ENCODE measurements at regions of chr13 and their contacts with region 1.

Region 1: GRCh38 chr13:98405107-98405571 is 171.8 kb downstream of the STK24 start:
- DNase-seq: no peak
- ATAC-seq: peak; percentile 34

Region 2: GRCh38 chr13:97100821-97101220 is 1304.3 kb before region 1 on chr13:
- intact Hi-C with region 1: no loop called
- DNase-seq: no peak
- ATAC-seq: no peak

Region 3: GRCh38 chr13:98133946-98134345 is 271.2 kb before region 1 on chr13:
- intact Hi-C with region 1: loop called in 1 of 2 experiments (anchors 10 kb)
- DNase-seq: no peak
- ATAC-seq: no peak

Region 4: GRCh38 chr13:98315466-98315865 is 89.7 kb before region 1 on chr13:
- intact Hi-C with region 1: no loop called
- DNase-seq: no peak
- ATAC-seq: no peak

Region 5: DNA sequence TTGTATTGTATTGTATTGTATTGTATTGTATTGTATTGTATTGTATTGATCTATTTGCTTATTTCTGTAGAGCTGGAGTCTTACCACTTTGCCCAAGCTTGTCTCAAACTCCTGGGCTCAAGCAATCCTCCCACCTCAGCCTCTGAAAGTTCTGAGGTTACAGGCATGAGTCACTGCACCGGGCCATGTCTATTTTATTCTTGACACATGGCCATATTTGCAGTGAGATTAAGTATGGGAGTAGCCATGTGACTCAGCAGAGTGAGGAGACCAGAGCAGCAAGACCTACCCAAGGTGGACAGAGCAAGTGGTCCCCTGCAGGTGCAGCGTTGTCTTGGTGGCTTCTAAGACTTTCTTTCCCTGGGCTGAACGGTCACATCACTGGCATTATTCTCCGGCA is 746.4 kb after region 1 on chr13:
- intact Hi-C with region 1: no loop called
- DNase-seq: no peak
- ATAC-seq: no peak

Region 6: DNA sequence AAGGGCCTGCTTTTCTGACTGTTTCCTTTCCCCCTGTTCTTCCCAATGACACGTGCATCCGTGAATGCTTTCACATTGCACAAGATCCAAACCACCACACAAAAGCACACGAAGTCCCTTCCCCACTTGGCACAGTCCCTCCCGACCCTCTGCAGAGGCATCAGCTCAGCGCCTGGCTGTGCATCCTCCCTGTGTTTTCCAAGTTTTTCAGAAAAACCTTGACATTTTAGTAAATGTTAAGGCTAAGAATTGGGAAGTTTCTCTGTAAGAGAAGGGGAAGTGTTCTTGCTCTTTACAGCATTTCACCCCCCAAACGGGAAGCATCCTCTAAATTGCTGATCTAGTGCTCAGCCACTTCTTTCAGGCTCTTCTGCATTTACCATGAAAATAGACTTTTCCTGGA is 1001.7 kb after region 1 on chr13:
- intact Hi-C with region 1: no loop called
- DNase-seq: no peak
- ATAC-seq: no peak

Measured in left colon (tissue), 2 donors.